H1 (cell line): ENCODE measurements at regions of chr6 and their contacts with region 1.

Region 1: DNA sequence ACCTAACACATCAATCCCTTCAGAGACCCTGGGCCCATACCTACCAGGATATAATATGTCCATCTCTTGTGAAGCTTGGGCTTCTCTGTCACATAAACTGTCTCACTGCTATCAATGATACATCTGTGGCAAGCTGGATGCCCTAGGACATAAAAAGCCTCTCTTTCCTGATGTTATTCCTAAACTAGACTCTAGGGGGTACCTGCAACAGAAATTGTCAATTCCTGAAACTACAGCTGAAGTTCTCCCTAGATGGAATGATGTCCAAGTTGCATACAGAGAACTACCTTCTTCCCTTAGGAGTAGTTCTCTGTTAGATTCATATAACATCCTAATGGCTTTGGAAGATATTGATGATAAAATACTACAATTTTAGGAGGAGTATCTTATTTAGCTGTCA is 35.8 kb downstream of the TBX18 start:
- DNase-seq: no peak
- H3K4me3 ChIP-seq: no peak overlapping the region
- H3K27ac ChIP-seq: no peak overlapping the region
- H3K4me1 ChIP-seq: no peaks in the 10 kb centered on the region
- H3K27me3 ChIP-seq: peaks cover 0 to 1% (median 0%) of the 10 kb centered on the region in 4 experiments; a peak in 1 of 7 replicates
- CTCF ChIP-seq: peak in 1 of 3 experiments; percentile 53; a peak in 1 of 4 replicates
- EP300 ChIP-seq: no peak
- POLR2A ChIP-seq: no peak
- RAD21 ChIP-seq: peak; percentile 34 to 49

Region 2: DNA sequence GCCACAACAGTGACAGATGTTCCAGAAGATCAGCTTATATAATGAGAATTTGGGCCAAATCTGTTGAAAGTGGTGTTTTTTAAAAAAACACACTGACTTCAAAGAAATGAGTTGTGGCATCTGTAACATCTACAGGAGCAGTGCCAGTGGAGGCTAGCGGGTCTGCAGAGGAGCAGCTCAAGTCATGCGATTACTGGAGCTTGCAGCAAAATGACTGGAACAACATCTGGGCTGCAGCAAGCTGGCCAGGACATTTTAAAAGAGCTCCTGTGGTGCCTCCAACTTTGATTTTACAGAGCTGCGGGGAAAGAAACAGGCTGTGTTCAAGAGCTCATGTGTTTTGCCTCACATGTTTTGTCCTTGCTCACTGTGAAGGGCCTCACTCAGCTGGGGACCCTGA is 21.4 kb before region 1 on chr6:
- CTCF ChIA-PET with region 1: interaction called, 15 read pairs
- POLR2A ChIA-PET with region 1: no interaction called
- DNase-seq: no peak
- H3K4me3 ChIP-seq: no peak overlapping the region
- H3K27ac ChIP-seq: no peak overlapping the region
- H3K4me1 ChIP-seq: no peaks in the 10 kb centered on the region
- H3K27me3 ChIP-seq: no peaks in the 10 kb centered on the region
- CTCF ChIP-seq: no peak
- EP300 ChIP-seq: no peak
- POLR2A ChIP-seq: no peak
- RAD21 ChIP-seq: no peak